Activated T-helper 1 cell treated with anti-CD3 and anti-CD28 coated beads, Interleukin-12 subunit alpha, Interleukin-12 subunit beta, Interleukin-2, Interleukin-4 antibody, amounts not matched to agents 30 ng/mL and 10 ng/mL and 1 ng/mL, durations not matched to agents 14 hours and 24 hours and 36 hours (primary cell): ENCODE measurements at regions of chr12 and their contacts with region 1.

Region 1: DNA sequence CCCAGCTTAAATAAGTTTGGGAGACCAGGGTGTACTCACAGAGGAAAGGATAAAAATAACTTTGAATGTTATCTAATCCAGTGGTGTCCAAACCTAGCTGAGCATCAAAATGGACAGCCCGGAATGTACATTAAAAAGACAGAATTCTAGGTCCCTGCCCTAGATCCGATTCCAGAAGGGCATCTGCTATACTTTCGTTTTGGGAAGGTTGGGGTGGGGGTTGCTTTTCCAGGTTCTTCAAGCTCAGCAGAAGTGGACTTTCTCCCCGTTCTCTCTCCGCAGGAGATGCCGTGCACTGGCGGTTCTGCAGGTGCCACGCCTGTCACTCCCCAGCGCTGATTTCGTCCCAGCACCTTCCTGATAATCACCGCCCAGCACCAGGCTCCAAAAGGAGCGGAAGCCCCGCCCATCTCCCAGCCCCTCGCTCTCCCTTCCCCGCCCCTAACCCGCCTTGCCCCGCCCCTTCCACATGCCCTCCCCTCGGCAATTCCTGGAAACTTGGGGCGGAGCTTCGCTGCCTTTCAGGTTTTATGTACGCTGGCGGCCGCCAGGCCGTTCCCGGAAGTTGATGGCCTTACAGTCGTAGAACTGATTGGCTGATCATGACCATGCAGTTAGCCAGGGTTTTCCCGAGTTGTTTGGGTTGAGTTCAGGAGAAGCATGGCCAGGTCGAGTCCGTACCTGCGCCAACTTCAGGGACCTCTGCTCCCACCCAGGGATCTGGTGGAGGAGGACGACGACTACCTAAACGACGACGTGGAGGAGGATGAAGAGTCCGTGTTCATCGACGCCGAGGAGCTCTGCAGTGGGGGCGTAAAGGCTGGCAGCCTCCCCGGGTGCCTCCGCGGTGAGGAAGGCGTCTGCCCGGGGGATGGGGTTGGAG is at the start of gene HELB:
- DNase-seq: peak; percentile 94
- H3K4me3 Mint-ChIP-seq: peak within 1 kb of the TSS; percentile 100
- H3K27ac Mint-ChIP-seq: peak within 1 kb of the TSS; percentile 99
- H3K4me1 Mint-ChIP-seq: peaks cover 61% of the 10 kb centered on the region
- H3K27me3 Mint-ChIP-seq: peaks cover 3% of the 10 kb centered on the region
- total RNA-seq, gene HELB: 20.5 and 21.5 TPM in 2 replicates

Region 2: DNA sequence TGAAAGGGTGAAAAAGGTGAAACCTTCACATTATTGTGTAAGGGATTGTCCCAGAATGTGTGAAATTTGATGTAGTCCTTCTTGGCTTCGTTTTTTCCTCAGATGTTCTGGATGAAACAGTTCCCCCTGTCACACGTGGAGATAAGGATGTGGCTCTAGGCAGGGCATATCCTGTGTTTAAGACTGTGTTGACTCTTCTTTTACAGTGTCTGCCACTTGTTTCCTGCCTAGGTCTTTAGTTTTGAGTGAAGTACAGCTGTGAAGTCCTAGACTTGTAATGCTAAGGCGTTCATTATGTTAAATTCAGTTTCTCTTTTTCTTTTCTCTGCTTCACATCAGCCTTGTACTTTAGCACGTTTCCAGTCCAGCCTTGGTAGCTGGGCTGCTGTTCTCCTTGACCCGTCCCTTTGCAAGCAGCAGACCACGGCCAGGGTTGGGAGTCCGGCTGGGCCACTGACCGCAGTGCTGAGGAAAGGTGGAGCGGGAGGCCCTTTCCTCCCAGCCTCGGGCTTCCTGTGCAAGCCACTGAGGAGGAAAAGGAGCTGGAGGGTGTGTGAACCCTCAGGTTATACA is 1632.8 kb before region 1 on chr12:
- intact Hi-C with region 1: loop called (anchors 10 kb)
- DNase-seq: peak; percentile 53
- H3K4me3 Mint-ChIP-seq: peak overlapping the region; percentile 85
- H3K27ac Mint-ChIP-seq: peak overlapping the region; percentile 94
- H3K4me1 Mint-ChIP-seq: peaks cover 87% of the 10 kb centered on the region
- H3K27me3 Mint-ChIP-seq: no peaks in the 10 kb centered on the region

Region 3: GRCh38 chr12:66130277-66131066 is 171.7 kb before region 1 on chr12 and contains the start of gene LLPH:
- intact Hi-C with region 1: loop called (anchors 1 kb)
- DNase-seq: peak; percentile 86
- H3K4me3 Mint-ChIP-seq: peak within 1 kb of the TSS; percentile 98
- H3K27ac Mint-ChIP-seq: peak within 1 kb of the TSS; percentile 93
- H3K4me1 Mint-ChIP-seq: peaks cover 57% of the 10 kb centered on the region
- H3K27me3 Mint-ChIP-seq: no peaks in the 10 kb centered on the region
- total RNA-seq, gene LLPH: 31.3 and 33.6 TPM in 2 replicates

Region 4: GRCh38 chr12:66235626-66236281 is 66.4 kb before region 1 on chr12:
- intact Hi-C with region 1: loop called (anchors 1 kb)
- DNase-seq: no peak
- H3K4me3 Mint-ChIP-seq: peak overlapping the region; percentile 59
- H3K27ac Mint-ChIP-seq: no peak overlapping the region
- H3K4me1 Mint-ChIP-seq: peaks cover 11% of the 10 kb centered on the region
- H3K27me3 Mint-ChIP-seq: peaks cover 17% of the 10 kb centered on the region

Region 5: DNA sequence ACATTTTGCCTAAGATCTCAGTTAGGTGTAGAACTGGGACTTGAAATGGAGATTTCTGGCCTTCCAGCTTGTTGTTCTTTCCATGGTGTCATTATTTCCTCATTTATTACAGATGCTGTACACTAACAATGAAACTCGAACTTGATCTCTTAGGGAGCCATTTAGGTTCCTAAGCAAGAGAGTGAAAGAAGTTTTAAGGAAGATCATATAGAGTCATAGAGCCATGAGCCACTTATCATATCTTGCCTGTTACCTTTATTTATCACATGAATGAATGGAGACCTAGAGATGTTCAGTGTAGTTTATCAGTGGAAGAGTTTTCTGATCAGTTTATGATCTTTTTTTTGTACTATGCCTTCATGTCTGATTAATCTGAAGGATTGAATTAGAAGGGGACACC is 10.0 kb after region 1 on chr12:
- intact Hi-C with region 1: loop called (anchors 1 kb)
- DNase-seq: no peak
- H3K4me3 Mint-ChIP-seq: peak overlapping the region; percentile 34
- H3K27ac Mint-ChIP-seq: peak overlapping the region; percentile 42
- H3K4me1 Mint-ChIP-seq: peaks cover 75% of the 10 kb centered on the region
- H3K27me3 Mint-ChIP-seq: no peaks in the 10 kb centered on the region